Activated CD8-positive, alpha-beta T cell treated with anti-CD3 and anti-CD28 coated beads, Interleukin-2, amount 10 ng/mL, durations not matched to agents 7 days and 5 days (primary cell): ENCODE measurements at regions of chr9 and their contacts with region 1.

Region 1: DNA sequence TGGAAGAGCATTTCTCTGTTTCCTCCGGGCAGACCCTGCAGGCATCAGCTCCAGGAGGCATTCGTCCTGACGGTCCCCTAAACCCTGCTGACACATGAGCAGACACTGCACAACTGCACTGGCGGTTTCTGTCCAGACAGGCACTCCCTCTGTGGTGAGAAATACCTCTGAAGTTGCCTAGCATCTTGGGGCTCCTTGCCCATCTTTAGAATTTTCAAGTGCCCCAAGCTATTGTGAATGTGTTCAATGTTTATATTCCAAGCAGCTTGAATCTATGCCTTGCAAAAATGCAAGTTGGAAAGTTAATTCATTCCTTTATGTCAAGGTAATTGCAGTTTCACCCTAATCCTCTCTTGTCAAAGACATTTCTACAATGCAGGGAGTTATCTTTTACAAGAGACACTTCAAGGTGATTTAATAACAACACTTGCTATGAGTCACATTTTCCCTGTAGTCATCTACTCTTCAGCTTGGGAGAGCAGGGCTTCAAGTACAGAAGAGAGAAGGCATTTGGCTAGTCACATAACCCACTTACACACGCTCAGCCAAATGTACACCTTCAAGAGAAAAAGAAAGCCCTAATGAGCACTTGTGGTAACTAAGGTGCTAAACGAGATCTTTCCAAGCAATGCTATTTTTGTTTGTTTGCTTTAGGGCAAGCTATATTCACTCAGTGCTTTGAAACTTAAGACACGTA is 302.5 kb downstream of the MLLT3 start:
- DNase-seq: peak; percentile 45
- ATAC-seq: peak; percentile 60
- H3K4me3 Mint-ChIP-seq: no peak overlapping the region
- H3K27ac Mint-ChIP-seq: peak overlapping the region; percentile 78
- H3K4me1 Mint-ChIP-seq: peaks cover 96% of the 10 kb centered on the region
- H3K27me3 Mint-ChIP-seq: no peaks in the 10 kb centered on the region

Region 2: DNA sequence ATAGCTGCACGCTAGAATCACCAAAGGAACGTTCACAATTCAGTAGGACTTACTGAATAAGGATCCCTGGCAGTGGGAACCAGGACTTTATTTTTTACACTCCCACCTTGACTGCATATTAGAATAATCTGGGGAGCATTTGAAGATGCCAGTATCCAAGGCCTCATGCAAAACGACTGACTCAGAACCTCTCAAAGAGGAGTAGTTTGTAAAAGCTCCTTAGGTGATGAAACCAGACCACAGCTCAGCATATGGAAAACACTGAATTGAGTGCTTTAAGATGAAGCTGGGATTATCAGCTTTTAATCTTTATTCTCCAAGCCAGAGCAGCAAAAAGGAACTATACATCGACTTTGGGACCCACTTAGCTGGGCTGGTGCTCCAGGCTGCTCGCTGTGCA is 14.2 kb after region 1 on chr9:
- CTCF ChIA-PET with region 1: interaction called, 18 read pairs
- POLR2A ChIA-PET with region 1: interaction called, 3 read pairs
- DNase-seq: no peak
- ATAC-seq: no peak
- H3K4me3 Mint-ChIP-seq: no peak overlapping the region
- H3K27ac Mint-ChIP-seq: no peak overlapping the region
- H3K4me1 Mint-ChIP-seq: peaks cover 67% of the 10 kb centered on the region
- H3K27me3 Mint-ChIP-seq: no peaks in the 10 kb centered on the region